Heart right ventricle (tissue), 16 donors: ENCODE measurements at regions of chr6 and their contacts with region 1.

Region 1: DNA sequence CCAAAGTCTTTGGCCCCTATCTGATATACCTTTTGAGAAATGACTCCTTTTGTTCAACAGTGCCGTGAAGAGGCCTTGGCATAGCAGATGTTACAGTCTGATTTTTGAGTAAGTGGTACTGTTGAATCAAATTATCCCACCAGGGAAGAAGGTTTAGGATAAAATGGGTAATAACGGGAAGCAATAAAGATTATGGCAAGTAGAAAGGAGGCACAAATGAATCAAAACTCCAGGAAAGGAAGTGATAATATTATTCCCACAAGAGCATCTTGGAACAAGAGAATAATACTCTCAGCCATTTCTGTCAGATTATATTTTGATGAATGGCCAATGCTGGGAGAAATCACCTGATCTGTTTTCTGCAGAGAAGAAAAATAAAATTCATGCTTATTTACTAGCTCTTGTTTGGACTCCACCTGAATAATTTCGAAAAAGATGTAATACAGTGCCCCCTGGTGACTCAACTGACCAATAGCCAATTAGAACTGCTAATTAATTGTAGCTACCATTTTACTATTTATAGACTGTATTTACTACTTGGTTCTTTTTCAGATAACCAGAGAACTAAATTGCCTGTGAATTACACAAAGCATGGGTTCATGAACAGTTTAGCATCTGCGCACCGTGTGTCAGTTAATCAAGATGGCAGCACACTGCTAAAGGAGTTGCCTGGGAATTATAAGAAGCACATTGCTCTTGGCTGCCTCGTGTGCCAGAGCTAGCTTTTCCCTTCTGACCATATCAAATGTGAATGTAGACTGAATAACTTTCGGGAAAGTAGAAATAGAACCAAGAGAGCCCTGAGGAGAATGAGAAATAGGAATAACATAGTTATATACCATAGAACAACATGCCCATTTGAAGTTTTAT is 78.5 kb upstream of the TRDN start:
- DNase-seq: peak in 1 of 2 donors; percentile 11
- ATAC-seq: peak in 5 of 8 donors; percentile 47 to 68 (median 49)
- H3K4me3 ChIP-seq: no peak overlapping the region
- H3K27ac ChIP-seq: no peak overlapping the region
- H3K4me1 ChIP-seq: peaks cover 0 to 4% (median 0%) of the 10 kb centered on the region in 9 donors
- H3K27me3 ChIP-seq: no peaks in the 10 kb centered on the region
- CTCF ChIP-seq: peak; percentile 35 to 68 (median 60)

Region 2: DNA sequence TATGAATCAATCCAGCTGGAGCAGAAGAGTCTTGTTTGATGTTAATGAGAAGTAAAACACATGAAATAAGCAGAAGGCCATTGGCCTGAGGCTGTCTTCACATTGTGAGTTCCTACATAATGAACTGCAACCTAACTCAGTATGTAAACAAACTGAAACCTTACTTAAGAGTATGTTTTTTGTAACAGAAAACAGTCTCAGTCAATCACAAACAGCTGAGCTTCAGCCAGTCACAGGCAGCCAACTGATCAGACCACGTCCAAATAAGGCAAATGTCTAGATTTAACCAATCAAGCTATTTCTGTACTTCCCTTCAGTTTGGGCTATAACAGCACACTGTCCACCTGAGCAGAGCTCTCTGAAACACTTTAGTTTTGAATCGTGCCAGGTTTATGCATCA is 313.2 kb before region 1 on chr6:
- intact Hi-C with region 1: loop called in 1 of 10 experiments (anchors 5 kb)
- DNase-seq: no peak
- ATAC-seq: no peak
- H3K4me3 ChIP-seq: no peak overlapping the region
- H3K27ac ChIP-seq: no peak overlapping the region
- H3K4me1 ChIP-seq: peaks cover 0 to 4% (median 0%) of the 10 kb centered on the region in 9 donors
- H3K27me3 ChIP-seq: no peaks in the 10 kb centered on the region
- CTCF ChIP-seq: no peak

Region 3: GRCh38 chr6:123415844-123416468 is 299.3 kb before region 1 on chr6:
- intact Hi-C with region 1: loop called in 8 of 10 experiments (anchors 1 to 5 kb)
- DNase-seq: peak in 1 of 2 donors; percentile 53
- ATAC-seq: peak; percentile 34 to 76 (median 68)
- H3K4me3 ChIP-seq: no peak overlapping the region
- H3K27ac ChIP-seq: peak overlapping the region in 1 of 10 donors; percentile 28
- H3K4me1 ChIP-seq: peaks cover 0 to 16% (median 0%) of the 10 kb centered on the region in 9 donors
- H3K27me3 ChIP-seq: no peaks in the 10 kb centered on the region
- CTCF ChIP-seq: peak; percentile 30 to 74 (median 70)

Region 4: GRCh38 chr6:123489589-123489988 is 225.7 kb before region 1 on chr6:
- intact Hi-C with region 1: loop called in 1 of 10 experiments (anchors 10 kb)
- DNase-seq: no peak
- ATAC-seq: no peak
- H3K4me3 ChIP-seq: no peak overlapping the region
- H3K27ac ChIP-seq: no peak overlapping the region
- H3K4me1 ChIP-seq: no peaks in the 10 kb centered on the region
- H3K27me3 ChIP-seq: no peaks in the 10 kb centered on the region
- CTCF ChIP-seq: no peak

Region 5: DNA sequence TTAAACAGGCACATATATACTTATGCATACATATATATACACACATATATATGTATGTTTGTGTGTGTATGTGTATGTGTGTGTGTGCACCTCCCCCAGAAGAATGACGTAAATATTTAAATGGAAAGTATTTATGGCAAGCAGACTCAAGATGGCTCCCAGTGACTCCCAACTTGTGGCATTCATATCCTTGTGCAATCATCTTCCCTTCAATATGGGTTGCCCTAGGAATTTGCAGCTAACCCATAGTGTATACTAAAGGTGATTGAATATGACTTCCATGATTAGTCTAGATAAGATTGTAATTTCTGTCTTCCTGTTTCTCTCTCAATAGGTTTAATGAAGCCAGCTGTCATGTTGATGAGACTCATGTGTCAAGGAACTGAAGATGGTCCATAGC is 206.1 kb before region 1 on chr6:
- intact Hi-C with region 1: loop called in 2 of 10 experiments (anchors 10 kb)
- DNase-seq: no peak
- ATAC-seq: peak in 1 of 8 donors; percentile 12
- H3K4me3 ChIP-seq: no peak overlapping the region
- H3K27ac ChIP-seq: no peak overlapping the region
- H3K4me1 ChIP-seq: peaks cover 0 to 4% (median 0%) of the 10 kb centered on the region in 9 donors
- H3K27me3 ChIP-seq: no peaks in the 10 kb centered on the region
- CTCF ChIP-seq: no peak

Region 6: DNA sequence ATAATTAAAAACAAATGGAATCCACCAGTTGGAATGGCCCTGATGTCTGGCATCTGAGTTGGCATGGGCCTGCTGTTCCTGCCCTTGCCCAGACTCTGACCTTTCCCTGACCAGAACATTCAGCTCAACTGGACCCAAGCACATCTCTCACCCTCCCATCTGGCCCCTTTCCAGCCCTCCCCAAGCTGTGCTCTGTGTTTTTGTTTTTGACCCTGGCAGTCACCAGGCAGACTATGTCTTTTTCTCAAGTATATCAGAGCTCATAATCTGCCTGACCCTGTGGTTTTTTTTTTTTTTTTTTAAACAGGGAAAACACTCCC is 196.1 kb before region 1 on chr6:
- intact Hi-C with region 1: loop called in 1 of 10 experiments (anchors 10 kb)
- DNase-seq: peak; percentile 78 to 84
- ATAC-seq: peak; percentile 42 to 97 (median 94)
- H3K4me3 ChIP-seq: peak overlapping the region in 3 of 10 donors; percentile 6 to 21 (median 19)
- H3K27ac ChIP-seq: peak overlapping the region; percentile 9 to 90 (median 82)
- H3K4me1 ChIP-seq: peaks cover 0 to 35% (median 11%) of the 10 kb centered on the region in 9 donors
- H3K27me3 ChIP-seq: no peaks in the 10 kb centered on the region
- CTCF ChIP-seq: no peak

Region 7: GRCh38 chr6:123648020-123648580 is 67.1 kb before region 1 on chr6:
- intact Hi-C with region 1: no loop called
- DNase-seq: no peak
- ATAC-seq: no peak
- H3K4me3 ChIP-seq: no peak overlapping the region
- H3K27ac ChIP-seq: no peak overlapping the region
- H3K4me1 ChIP-seq: peaks cover 0 to 6% (median 0%) of the 10 kb centered on the region in 9 donors
- H3K27me3 ChIP-seq: no peaks in the 10 kb centered on the region
- CTCF ChIP-seq: no peak